ENCODE measurements at regions of chr3 and their contacts with region 1.

Region 1: DNA sequence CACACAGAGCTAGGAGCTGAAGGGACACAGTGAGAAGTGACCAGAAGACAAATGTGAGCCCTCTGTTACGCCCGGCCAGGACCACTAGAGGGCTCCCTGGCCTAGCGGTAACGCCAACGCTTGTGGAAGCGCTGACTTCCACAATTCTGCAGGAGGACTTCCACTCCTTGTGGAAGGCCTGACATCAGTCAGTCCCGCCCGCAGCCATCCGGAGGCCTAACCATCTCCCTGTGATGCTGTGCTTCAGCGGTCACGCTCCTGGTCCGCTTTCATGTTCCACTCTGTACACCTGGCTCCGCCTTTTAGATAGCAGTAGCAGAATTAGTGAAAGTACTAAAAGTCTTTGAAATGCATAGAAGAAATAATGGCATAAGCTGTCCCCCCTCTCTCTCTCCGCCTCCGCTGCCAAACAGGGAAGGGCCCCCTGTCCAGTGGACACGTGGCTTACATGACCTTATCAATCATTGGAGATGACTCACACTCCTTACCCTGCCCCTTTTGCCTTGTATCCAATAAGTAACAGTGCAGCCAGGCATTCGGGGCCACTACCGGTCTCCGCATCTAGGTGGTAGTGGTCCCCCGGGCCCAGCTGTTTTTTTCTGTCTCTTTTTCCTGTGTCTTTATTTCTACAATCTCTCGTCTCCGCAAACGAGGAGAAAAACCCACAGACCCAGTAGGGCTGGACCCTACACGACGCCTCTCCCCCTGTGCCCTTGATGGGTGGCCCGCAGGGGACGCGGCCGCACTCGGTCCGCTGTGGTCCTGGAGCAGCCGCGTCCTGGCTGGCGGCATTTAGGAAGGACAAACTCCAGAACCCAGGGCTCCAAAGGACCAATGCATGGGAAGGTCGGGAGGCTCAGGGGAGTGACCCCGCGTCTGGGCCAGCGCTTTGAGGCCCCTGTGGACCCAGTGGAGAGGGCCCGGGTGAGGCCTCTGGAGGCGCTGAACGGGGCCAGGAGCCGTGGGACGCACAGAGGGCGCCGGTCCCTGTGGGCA is 27.0 kb upstream of the RPL32 start:
- DNase-seq: peak; percentile 82
- ATAC-seq: peak; percentile 70
- H3K4me3 Mint-ChIP-seq: peak overlapping the region; percentile 87
- H3K27ac Mint-ChIP-seq: peak overlapping the region; percentile 62; the same call in 1 of the 2 replicates
- H3K4me1 Mint-ChIP-seq: peaks cover 4% of the 10 kb centered on the region
- H3K27me3 Mint-ChIP-seq: peaks cover 57% of the 10 kb centered on the region
- CTCF ChIP-seq: peak; percentile 62

Region 2: DNA sequence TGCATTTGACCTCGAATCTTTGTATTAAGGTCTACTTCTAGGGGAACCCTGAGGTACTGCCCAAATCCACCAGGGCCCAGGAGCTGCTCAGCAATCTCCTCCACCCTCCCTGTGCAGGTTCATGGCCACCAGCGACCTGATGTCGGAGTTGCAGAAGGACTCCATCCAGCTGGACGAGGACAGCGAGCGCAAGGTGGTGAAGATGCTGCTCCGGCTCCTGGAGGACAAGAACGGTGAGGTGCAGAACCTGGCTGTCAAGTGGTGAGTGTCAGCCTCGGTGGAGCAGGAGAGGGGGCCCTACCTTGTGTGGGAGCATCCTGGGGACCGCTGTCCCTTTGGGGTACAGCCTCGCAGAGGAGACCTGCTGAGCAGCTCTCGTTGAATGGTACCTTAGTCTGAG is 65.0 kb before region 1 on chr3:
- CTCF ChIA-PET with region 1: no interaction called
- POLR2A ChIA-PET with region 1: no interaction called
- DNase-seq: no peak
- ATAC-seq: no peak
- H3K4me3 Mint-ChIP-seq: no peak overlapping the region
- H3K27ac Mint-ChIP-seq: no peak overlapping the region
- H3K4me1 Mint-ChIP-seq: peaks cover 2% of the 10 kb centered on the region; the same call in 1 of the 2 replicates
- H3K27me3 Mint-ChIP-seq: no peaks in the 10 kb centered on the region; the same call in 1 of the 2 replicates
- CTCF ChIP-seq: no peak

Region 3: DNA sequence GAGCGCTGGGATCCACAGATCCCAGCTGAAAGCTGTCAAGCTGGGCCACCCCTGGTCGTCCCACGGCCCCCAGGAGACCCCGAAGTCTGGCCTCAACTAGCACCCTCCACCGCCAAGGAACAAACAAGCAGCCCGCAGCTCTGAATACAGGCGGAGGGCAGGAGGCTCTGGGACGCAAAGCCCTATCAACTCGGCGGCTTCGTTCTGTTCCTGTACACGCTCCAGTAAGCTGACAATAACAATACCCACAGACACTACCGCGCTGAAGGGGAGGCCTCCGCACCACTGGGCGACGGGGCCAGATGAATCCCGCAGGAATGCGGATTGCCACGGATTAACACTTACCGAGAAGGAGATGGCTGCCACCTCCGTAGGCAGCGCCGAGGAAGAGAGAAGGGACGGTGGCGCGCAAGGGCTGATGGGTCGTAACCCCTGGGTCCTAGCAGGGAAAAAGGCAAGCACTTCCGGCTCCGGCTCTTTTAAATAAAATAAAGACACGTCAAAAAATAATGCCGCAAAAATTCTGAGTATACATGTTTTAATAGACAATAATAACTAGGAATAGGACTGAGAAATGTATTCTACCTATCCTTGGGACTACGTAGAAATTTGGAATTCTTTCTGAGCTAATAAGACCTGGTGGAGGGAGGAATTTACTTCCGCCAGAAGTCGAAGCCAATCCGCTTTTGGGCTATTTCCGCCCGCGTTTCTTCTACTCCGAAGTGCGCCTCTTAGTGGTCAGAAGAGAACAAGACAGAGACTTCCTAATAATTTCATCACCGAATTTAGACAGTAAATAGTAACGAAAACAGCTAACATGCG is 27.0 kb before region 1 on chr3 and contains the start of gene RPL32:
- CTCF ChIA-PET with region 1: interaction called, 10 read pairs
- POLR2A ChIA-PET with region 1: no interaction called
- DNase-seq: peak; percentile 76
- ATAC-seq: peak; percentile 78
- H3K4me3 Mint-ChIP-seq: peak within 1 kb of the TSS; percentile 98
- H3K27ac Mint-ChIP-seq: peak within 1 kb of the TSS; percentile 99
- H3K4me1 Mint-ChIP-seq: peaks cover 51% of the 10 kb centered on the region
- H3K27me3 Mint-ChIP-seq: peaks cover 4% of the 10 kb centered on the region
- CTCF ChIP-seq: peak; percentile 18; the same call in 1 of the 2 replicates
- total RNA-seq, gene RPL32: 1,643 to 1,831 TPM (median 1,818 TPM) in 3 replicates

Region 4: GRCh38 chr3:12886106-12886679 is 17.9 kb after region 1 on chr3:
- CTCF ChIA-PET with region 1: interaction called, 36 read pairs
- POLR2A ChIA-PET with region 1: no interaction called
- DNase-seq: no peak
- ATAC-seq: no peak
- H3K4me3 Mint-ChIP-seq: no peak overlapping the region
- H3K27ac Mint-ChIP-seq: no peak overlapping the region
- H3K4me1 Mint-ChIP-seq: peaks cover 9% of the 10 kb centered on the region
- H3K27me3 Mint-ChIP-seq: peaks cover 61% of the 10 kb centered on the region
- CTCF ChIP-seq: no peak

Region 5: GRCh38 chr3:12891985-12892839 is 23.9 kb after region 1 on chr3:
- CTCF ChIA-PET with region 1: interaction called, 36 read pairs
- POLR2A ChIA-PET with region 1: no interaction called
- DNase-seq: peak; percentile 50
- ATAC-seq: peak; percentile 54
- H3K4me3 Mint-ChIP-seq: no peak overlapping the region
- H3K27ac Mint-ChIP-seq: no peak overlapping the region
- H3K4me1 Mint-ChIP-seq: peaks cover 6% of the 10 kb centered on the region; the same call in 1 of the 2 replicates
- H3K27me3 Mint-ChIP-seq: peaks cover 47% of the 10 kb centered on the region
- CTCF ChIP-seq: peak; percentile 77

Region 6: GRCh38 chr3:12967606-12968351 is 99.4 kb after region 1 on chr3:
- CTCF ChIA-PET with region 1: interaction called, 11 read pairs
- POLR2A ChIA-PET with region 1: no interaction called
- DNase-seq: peak; percentile 84
- ATAC-seq: peak; percentile 92
- H3K4me3 Mint-ChIP-seq: peak overlapping the region; percentile 64
- H3K27ac Mint-ChIP-seq: 0 out of 2 replicates have a peak overlapping the region, but pooled peaks have one; percentile 15
- H3K4me1 Mint-ChIP-seq: peaks cover 31% of the 10 kb centered on the region
- H3K27me3 Mint-ChIP-seq: peaks cover 25% of the 10 kb centered on the region
- CTCF ChIP-seq: no peak

Measured in WTC11 (cell line).